Heart right ventricle (tissue), 16 donors: ENCODE measurements at regions of chrX and their contacts with region 1.

Region 1: GRCh38 chrX:40468033-40468846 is 112.5 kb upstream of the ATP6AP2 start:
- DNase-seq: peak; percentile 16 to 42
- ATAC-seq: peak; percentile 84 to 96 (median 88)
- H3K4me3 ChIP-seq: no peak overlapping the region
- H3K27ac ChIP-seq: peak overlapping the region in 2 of 10 donors; percentile 11 to 15
- H3K4me1 ChIP-seq: peaks cover 0 to 21% (median 6%) of the 10 kb centered on the region in 9 donors
- H3K27me3 ChIP-seq: peaks cover 0 to 59% (median 0%) of the 10 kb centered on the region in 7 donors
- CTCF ChIP-seq: peak in 6 of 9 donors; percentile 30 to 59 (median 49)

Region 2: GRCh38 chrX:40273356-40274050 is 194.7 kb before region 1 on chrX:
- intact Hi-C with region 1: loop called in 2 of 10 experiments (anchors 10 kb)
- DNase-seq: peak in 1 of 2 donors; percentile 35
- ATAC-seq: peak; percentile 70 to 88 (median 80)
- H3K4me3 ChIP-seq: no peak overlapping the region
- H3K27ac ChIP-seq: no peak overlapping the region
- H3K4me1 ChIP-seq: peaks cover 0 to 11% (median 0%) of the 10 kb centered on the region in 9 donors
- H3K27me3 ChIP-seq: no peaks in the 10 kb centered on the region
- CTCF ChIP-seq: no peak

Region 3: GRCh38 chrX:40298572-40299479 is 169.4 kb before region 1 on chrX:
- intact Hi-C with region 1: loop called in 1 of 10 experiments (anchors 10 kb)
- DNase-seq: no peak
- ATAC-seq: no peak
- H3K4me3 ChIP-seq: no peak overlapping the region
- H3K27ac ChIP-seq: no peak overlapping the region
- H3K4me1 ChIP-seq: no peaks in the 10 kb centered on the region
- H3K27me3 ChIP-seq: peaks cover 0 to 49% (median 0%) of the 10 kb centered on the region in 7 donors
- CTCF ChIP-seq: peak in 3 of 9 donors; percentile 10 to 31 (median 14)